HAP-1 (cell line): ENCODE measurements at regions of chr7 and their contacts with region 1.

Region 1: DNA sequence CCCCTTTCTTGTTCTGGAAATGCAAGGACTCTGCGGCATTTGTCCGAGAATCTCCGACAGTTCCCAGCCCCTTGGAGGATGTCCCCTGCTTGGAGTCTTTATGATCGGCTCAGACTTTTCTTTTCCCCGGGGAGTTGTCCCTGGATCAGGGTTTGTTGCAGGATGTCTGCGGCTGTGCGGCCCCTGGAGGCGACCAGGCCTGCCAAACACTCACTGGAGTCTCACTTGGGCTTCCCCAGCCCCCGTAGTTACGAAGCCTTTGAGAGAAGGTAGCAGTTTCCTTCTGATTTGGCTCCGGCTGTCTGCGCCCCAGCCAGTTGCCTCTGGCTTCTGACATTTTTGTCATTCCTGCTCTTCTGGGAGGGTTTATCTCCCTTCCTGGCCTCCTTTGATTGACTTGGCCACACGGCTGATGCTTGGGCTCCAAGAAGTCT is 16.1 kb downstream of the COL26A1 start:
- DNase-seq: peak; percentile 24 to 67
- H3K4me3 ChIP-seq: no peak overlapping the region
- H3K4me1 ChIP-seq: peaks cover 9% of the 10 kb centered on the region
- H3K27me3 ChIP-seq: no peaks in the 10 kb centered on the region

Region 2: GRCh38 chr7:101507791-101508252 is 129.1 kb after region 1 on chr7:
- in situ Hi-C with region 1: loop called (anchors 10 kb)
- DNase-seq: peak; percentile 78 to 86
- H3K4me3 ChIP-seq: no peak overlapping the region
- H3K4me1 ChIP-seq: no peaks in the 10 kb centered on the region
- H3K27me3 ChIP-seq: no peaks in the 10 kb centered on the region

Region 3: DNA sequence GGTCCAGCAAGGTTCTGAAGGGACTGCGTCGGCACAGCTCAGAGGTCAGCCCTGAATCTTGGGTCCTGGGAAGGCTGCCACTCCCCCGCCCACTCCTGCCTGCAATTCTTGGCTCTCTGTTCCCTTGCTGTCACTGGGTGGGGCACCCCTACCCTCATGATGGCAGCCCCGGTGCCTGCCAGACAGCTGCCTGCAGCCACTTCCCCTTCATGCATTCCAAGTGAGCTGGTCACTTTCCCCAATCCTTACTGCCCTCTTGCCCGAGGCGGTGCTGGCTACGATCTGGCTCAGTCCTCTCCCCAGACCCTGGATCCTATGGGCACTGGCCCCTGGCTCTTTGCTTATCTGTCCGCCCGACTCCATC is 236.2 kb after region 1 on chr7:
- in situ Hi-C with region 1: no loop called
- DNase-seq: no peak
- H3K4me3 ChIP-seq: no peak overlapping the region
- H3K4me1 ChIP-seq: no peaks in the 10 kb centered on the region
- H3K27me3 ChIP-seq: 0 out of 2 replicates have a peak, but pooled peaks cover 3% of the 10 kb centered on the region